ENCODE measurements at regions of chrX and their contacts with region 1.

Region 1: DNA sequence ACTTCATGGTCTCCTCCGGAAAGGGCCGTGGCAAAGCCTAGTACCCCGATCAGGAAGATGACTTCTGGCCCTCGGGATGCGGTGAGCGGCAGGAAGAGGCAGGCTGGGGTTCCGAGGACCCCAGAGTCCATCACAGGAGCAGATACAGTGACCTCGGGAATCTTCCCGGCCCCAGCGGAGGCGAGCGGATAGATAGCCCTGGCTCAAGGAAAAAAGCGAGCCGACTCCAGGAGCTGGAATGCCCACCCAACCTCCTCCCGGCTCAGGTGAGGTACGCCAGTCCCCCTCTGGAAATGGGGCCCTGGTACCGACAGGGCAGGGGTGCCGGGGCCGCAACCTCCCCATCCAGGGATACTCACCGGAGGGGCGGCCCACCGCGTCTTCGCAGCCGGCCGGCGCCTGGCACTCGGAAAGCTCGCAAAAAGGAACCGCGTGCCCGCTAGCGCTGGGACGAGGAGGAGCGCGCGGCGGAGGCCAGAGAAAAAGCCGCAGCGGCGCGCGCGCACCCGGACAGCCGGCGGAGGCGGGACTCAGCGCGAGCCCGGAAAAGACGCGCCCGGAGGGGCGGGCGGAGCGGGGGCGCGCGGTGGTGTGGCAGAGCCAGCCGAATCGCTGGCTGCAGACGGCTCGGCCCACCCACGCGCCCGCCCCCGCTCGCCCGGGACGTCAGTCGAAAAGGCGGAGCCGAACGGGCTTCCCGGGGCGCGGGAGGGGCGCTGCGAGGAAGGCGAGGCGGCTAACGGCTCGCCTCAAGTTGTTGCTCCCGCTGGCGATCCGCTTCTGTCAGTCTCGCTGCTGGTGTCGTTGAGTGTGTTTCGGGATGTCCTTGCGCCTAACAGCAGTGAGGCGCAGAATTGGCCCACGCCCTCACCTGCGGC is at the start of gene ACSL4:
- DNase-seq: peak; percentile 76 to 83 (median 80)
- H3K4me3 ChIP-seq: peak within 1 kb of the TSS; percentile 67 to 84 (median 83)
- H3K4me3 Mint-ChIP-seq: peak within 1 kb of the TSS; percentile 97 to 98
- H3K27ac ChIP-seq: peak within 1 kb of the TSS; percentile 88 to 96
- H3K27ac Mint-ChIP-seq: peak within 1 kb of the TSS; percentile 95 to 99 (median 97)
- H3K4me1 ChIP-seq: peaks cover 29 to 66% of the 10 kb centered on the region in 2 donors
- H3K4me1 Mint-ChIP-seq: peaks cover 37% of the 10 kb centered on the region
- H3K27me3 ChIP-seq: no peaks in the 10 kb centered on the region
- H3K27me3 Mint-ChIP-seq: peaks cover 0 to 3% (median 0%) of the 10 kb centered on the region in 3 donors
- CTCF ChIP-seq: no peak
- polyA plus RNA-seq, gene ACSL4: 17.9 to 40.9 (median 31.2) TPM

Region 2: DNA sequence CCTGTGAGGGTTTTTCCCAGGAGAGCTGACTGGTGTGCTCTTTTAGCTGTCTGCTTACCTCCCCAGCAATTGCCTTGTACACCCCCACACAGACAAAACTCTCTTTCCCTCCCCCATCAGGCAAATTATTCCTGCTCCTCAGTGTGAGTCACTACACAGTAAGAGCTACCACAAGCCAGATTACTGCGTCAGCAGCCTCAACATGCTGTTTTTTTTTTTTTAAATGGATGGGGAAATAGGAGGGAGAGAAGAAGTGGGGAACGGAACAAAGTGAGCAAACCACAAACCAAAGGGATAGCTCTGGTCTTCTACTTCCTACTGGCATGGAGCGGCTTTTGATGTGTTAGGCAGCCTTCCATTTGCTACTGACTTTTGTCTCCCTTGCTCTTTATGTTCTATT is 107.6 kb after region 1 on chrX:
- intact Hi-C with region 1: loop called in 1 of 2 experiments (anchors 10 kb)
- DNase-seq: peak; percentile 82 to 89 (median 84)
- H3K4me3 ChIP-seq: peak overlapping the region in 2 of 3 experiments; percentile 1 to 37
- H3K4me3 Mint-ChIP-seq: no peak overlapping the region
- H3K27ac ChIP-seq: peak overlapping the region; percentile 90 to 92
- H3K27ac Mint-ChIP-seq: no peak overlapping the region
- H3K4me1 ChIP-seq: peaks cover 46 to 52% of the 10 kb centered on the region in 2 donors
- H3K4me1 Mint-ChIP-seq: peaks cover 30% of the 10 kb centered on the region
- H3K27me3 ChIP-seq: peaks cover 0 to 2% of the 10 kb centered on the region in 2 donors
- H3K27me3 Mint-ChIP-seq: peaks cover 0 to 17% (median 0%) of the 10 kb centered on the region in 3 donors
- CTCF ChIP-seq: no peak